ENCODE measurements at regions of chr1 and their contacts with region 1.

Region 1: DNA sequence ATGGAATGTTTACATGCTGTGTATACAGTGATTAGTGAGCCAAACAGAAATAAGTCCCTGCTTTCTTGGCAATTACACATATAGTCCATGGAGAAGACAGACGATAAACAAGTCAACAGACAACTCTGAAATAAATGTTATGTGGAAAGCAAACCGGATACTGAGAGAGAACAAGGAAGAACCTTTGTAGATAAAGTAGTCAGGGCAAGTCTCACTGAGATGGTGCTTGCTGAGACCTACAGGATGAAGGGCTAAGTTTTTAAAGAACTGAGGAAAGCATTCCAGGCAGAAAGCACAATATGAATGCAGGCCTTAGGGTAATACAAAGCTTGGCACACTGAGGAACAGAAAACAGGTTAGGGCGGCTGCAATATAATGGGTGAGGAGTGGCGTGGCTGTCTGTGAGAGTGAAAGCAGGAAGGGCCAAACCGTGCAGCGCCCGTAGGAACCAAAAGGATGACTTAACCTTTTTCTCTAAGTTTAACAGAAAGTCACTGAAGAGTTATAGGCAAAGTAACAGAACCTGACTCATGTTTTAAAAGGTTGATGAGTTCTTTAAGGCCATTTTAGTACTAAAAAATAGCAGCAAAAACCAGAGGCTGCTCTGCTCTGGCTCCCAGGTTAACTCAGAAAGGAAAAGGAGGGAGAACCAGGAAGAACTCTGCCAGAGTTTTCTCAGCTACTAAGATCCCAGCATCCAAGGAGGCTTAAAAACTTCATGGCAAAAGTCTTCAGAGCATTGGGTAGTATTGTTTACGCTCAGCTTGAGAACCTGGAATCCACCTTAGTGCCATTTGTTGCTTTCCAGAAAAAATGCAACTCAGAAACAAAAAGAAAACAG is 8.7 kb upstream of the TTF2 start:
- DNase-seq: peak in 6 of 9 donors; percentile 13 to 34 (median 28)
- ATAC-seq: peak; percentile 34
- H3K4me3 ChIP-seq: peak overlapping the region; percentile 26
- H3K4me3 Mint-ChIP-seq: peak overlapping the region; percentile 49 to 94 (median 84)
- H3K27ac ChIP-seq: peak overlapping the region; percentile 54
- H3K27ac Mint-ChIP-seq: peak overlapping the region; percentile 87 to 99 (median 95)
- H3K4me1 ChIP-seq: peaks cover 6 to 45% of the 10 kb centered on the region in 2 donors
- H3K4me1 Mint-ChIP-seq: peaks cover 30 to 66% (median 58%) of the 10 kb centered on the region in 7 donors
- H3K27me3 ChIP-seq: no peaks in the 10 kb centered on the region
- H3K27me3 Mint-ChIP-seq: no peaks in the 10 kb centered on the region

Region 2: DNA sequence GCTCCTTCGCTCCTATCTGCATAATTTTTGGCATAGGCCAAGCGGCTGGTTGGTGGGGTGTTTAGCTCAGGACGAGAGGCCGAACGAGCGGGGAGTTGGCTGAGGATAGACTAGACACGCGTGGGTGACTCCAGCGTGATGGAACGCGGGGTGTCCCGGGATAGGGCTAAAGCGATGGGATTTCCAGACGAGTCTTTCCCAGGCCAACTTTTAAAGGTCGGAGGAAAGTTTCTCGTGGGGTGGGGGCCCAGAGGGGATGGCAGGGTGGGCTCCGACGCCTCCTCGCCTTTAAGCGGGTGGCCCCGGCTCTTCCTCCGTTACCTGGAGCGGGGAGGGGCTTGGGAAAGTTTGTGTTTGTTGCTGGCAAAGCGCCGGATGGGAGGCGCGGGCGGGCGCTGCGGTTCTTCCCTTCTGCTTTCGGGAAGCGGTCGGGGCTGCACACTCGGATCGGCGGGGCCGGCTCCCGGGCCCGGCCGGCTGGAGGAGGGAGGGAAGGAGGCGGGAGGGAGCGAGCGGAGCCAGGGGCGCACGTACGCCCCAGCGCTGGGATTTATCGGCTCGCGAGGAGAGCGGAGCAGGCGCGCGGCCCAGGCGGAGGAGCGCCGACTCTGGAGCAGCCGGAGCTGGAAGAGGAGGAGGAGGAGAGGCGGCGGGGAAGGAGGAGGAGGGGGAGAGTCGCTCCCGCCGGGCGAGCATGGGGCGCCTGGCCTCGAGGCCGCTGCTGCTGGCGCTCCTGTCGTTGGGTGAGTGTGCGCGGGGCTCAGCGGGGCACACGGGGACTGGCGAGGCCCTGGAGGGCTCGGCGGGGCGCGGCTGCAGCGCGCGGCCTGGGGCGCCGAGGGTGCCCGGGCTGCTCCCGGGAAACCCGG is 141.7 kb before region 1 on chr1 and contains the start of gene PTGFRN:
- CTCF ChIA-PET with region 1: no interaction called
- POLR2A ChIA-PET with region 1: no interaction called
- intact Hi-C with region 1: loop called in 1 of 2 experiments (anchors 1 kb)
- DNase-seq: peak in 7 of 9 donors; percentile 5 to 45 (median 22)
- ATAC-seq: peak; percentile 62
- H3K4me3 ChIP-seq: peak within 1 kb of the TSS; percentile 68
- H3K4me3 Mint-ChIP-seq: peak within 1 kb of the TSS in 9 of 10 donors; percentile 72 to 91 (median 84)
- H3K27ac ChIP-seq: peak within 1 kb of the TSS; percentile 52
- H3K27ac Mint-ChIP-seq: peak within 1 kb of the TSS; percentile 18 to 82 (median 64)
- H3K4me1 ChIP-seq: peaks cover 0 to 10% of the 10 kb centered on the region in 2 donors
- H3K4me1 Mint-ChIP-seq: peaks cover 0 to 8% (median 6%) of the 10 kb centered on the region in 7 donors
- H3K27me3 ChIP-seq: no peaks in the 10 kb centered on the region
- H3K27me3 Mint-ChIP-seq: peaks cover 0 to 7% (median 0%) of the 10 kb centered on the region in 5 donors
- total RNA-seq, gene PTGFRN: 1.00 to 5.6 (median 1.5) TPM

Region 3: GRCh38 chr1:117009132-117009531 is 42.3 kb before region 1 on chr1:
- CTCF ChIA-PET with region 1: interaction called, 3 read pairs
- POLR2A ChIA-PET with region 1: interaction called, 10 read pairs
- intact Hi-C with region 1: loop called (anchors 2 to 5 kb)
- DNase-seq: peak in 6 of 9 donors; percentile 27 to 55 (median 44)
- ATAC-seq: peak; percentile 70
- H3K4me3 ChIP-seq: no peak overlapping the region
- H3K4me3 Mint-ChIP-seq: peak overlapping the region; percentile 42 to 85 (median 73)
- H3K27ac ChIP-seq: peak overlapping the region; percentile 42
- H3K27ac Mint-ChIP-seq: peak overlapping the region; percentile 72 to 96 (median 92)
- H3K4me1 ChIP-seq: peaks cover 0 to 44% of the 10 kb centered on the region in 2 donors
- H3K4me1 Mint-ChIP-seq: peaks cover 31 to 86% (median 65%) of the 10 kb centered on the region in 7 donors
- H3K27me3 ChIP-seq: no peaks in the 10 kb centered on the region
- H3K27me3 Mint-ChIP-seq: no peaks in the 10 kb centered on the region

Region 4: GRCh38 chr1:117110774-117111173 is 59.3 kb after region 1 on chr1:
- CTCF ChIA-PET with region 1: no interaction called
- POLR2A ChIA-PET with region 1: no interaction called
- intact Hi-C with region 1: no loop called
- DNase-seq: no peak
- ATAC-seq: no peak
- H3K4me3 ChIP-seq: no peak overlapping the region
- H3K4me3 Mint-ChIP-seq: no peak overlapping the region
- H3K27ac ChIP-seq: no peak overlapping the region
- H3K27ac Mint-ChIP-seq: no peak overlapping the region
- H3K4me1 ChIP-seq: peaks cover 0 to 4% of the 10 kb centered on the region in 2 donors
- H3K4me1 Mint-ChIP-seq: peaks cover 0 to 6% (median 0%) of the 10 kb centered on the region in 7 donors
- H3K27me3 ChIP-seq: no peaks in the 10 kb centered on the region
- H3K27me3 Mint-ChIP-seq: no peaks in the 10 kb centered on the region

Region 5: DNA sequence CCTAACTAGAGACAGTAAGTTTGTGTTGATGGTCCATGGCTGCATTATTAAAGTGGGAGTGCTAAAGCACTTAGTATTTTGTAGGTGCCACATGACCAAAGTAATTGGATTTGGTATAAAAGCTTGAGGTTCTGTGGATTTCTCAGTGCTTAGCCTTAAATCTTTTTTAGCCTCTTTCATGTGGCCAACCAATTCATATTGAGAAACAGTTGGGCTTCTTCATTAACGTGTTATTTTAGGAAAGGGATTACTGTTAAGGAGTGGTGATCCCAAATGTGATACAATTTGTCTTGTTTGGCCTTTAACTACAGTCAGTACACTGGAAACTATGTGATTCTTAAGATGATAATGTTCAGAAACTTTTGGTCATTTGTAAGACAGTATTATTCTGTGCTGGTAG is 341.3 kb after region 1 on chr1:
- CTCF ChIA-PET with region 1: no interaction called
- POLR2A ChIA-PET with region 1: no interaction called
- intact Hi-C with region 1: no loop called
- DNase-seq: no peak
- ATAC-seq: no peak
- H3K4me3 ChIP-seq: no peak overlapping the region
- H3K4me3 Mint-ChIP-seq: no peak overlapping the region
- H3K27ac ChIP-seq: no peak overlapping the region
- H3K27ac Mint-ChIP-seq: no peak overlapping the region
- H3K4me1 ChIP-seq: peaks cover 6 to 11% of the 10 kb centered on the region in 2 donors
- H3K4me1 Mint-ChIP-seq: peaks cover 11 to 88% (median 76%) of the 10 kb centered on the region in 7 donors
- H3K27me3 ChIP-seq: no peaks in the 10 kb centered on the region
- H3K27me3 Mint-ChIP-seq: no peaks in the 10 kb centered on the region